CD4-positive, alpha-beta memory T cell (primary cell): ENCODE measurements at regions of chr20 and their contacts with region 1.

Region 1: GRCh38 chr20:21125849-21126580 is at the start of gene KIZ:
- DNase-seq: peak; percentile 92 to 99 (median 97)
- H3K4me3 ChIP-seq: peak within 1 kb of the TSS; percentile 78 to 81
- H3K4me3 Mint-ChIP-seq: peak within 1 kb of the TSS; percentile 84 to 99 (median 93)
- H3K27ac ChIP-seq: peak within 1 kb of the TSS; percentile 68
- H3K27ac Mint-ChIP-seq: peak within 1 kb of the TSS; percentile 55 to 98 (median 93)
- H3K4me1 ChIP-seq: peaks cover 21% of the 10 kb centered on the region
- H3K4me1 Mint-ChIP-seq: peaks cover 11 to 28% (median 20%) of the 10 kb centered on the region in 4 donors
- H3K27me3 ChIP-seq: no peaks in the 10 kb centered on the region
- H3K27me3 Mint-ChIP-seq: peaks cover 0 to 2% of the 10 kb centered on the region in 2 donors
- total RNA-seq, gene KIZ: 33.7 to 46.3 TPM

Region 2: DNA sequence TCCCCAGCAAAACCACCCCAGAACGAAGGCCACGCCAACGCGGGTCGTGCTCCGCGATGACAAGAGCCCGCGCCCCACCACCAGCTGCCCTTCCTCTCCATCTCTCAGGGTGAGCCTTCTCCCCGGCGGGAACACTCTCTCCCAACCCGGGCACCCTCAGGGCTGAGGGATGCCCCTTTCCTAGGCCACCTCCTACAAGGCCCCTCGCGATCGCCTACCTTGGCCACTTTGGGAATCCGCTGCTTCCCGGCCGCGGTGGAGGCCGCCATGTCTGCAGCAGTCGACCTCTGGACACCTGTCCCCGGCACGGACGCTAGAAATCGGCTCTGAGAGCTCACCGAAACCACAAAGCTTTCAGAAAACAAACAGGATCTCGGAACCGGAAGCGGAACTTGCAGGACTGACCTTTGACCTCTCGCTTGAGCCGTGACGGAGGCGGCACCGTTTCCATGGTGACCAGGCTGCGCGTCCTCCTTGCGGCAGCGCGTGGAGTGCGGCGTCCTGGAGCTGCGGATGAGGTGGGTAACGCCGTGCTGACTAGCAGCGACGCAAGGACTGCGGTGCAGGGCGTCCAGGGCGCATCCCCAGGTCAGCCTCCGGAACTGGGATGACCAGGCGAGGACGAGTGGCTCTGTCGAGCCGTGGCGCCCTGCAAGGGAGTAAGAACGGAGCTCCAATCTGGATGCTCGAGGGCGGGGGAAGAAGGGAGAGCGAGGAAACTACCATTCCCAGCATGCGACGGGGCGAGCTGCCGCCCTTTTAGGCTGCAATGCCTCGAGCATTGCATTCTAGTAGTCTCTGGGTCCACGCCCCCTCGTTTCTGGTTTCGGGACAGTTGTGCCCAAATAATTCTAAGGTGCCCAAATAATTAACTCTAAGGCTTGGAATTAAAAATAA is 1073.7 kb before region 1 on chr20 and contains the starts of genes CFAP61 and CRNKL1:
- CTCF ChIA-PET with region 1: no interaction called
- POLR2A ChIA-PET with region 1: no interaction called
- intact Hi-C with region 1: loop called (anchors 5 kb)
- DNase-seq: peak; percentile 97 to 99 (median 98)
- H3K4me3 ChIP-seq: peak within 1 kb of the TSS; percentile 85 to 98
- H3K4me3 Mint-ChIP-seq: peak within 1 kb of the TSS; percentile 93 to 100 (median 99)
- H3K27ac ChIP-seq: peak within 1 kb of the TSS; percentile 81
- H3K27ac Mint-ChIP-seq: peak within 1 kb of the TSS; percentile 92 to 100 (median 99)
- H3K4me1 ChIP-seq: peaks cover 19% of the 10 kb centered on the region
- H3K4me1 Mint-ChIP-seq: peaks cover 16 to 25% (median 21%) of the 10 kb centered on the region in 4 donors
- H3K27me3 ChIP-seq: peaks cover 7% of the 10 kb centered on the region
- H3K27me3 Mint-ChIP-seq: peaks cover 0 to 4% of the 10 kb centered on the region in 2 donors
- total RNA-seq, gene CFAP61: not detected
- total RNA-seq, gene CRNKL1: 30.0 to 32.9 TPM

Region 3: DNA sequence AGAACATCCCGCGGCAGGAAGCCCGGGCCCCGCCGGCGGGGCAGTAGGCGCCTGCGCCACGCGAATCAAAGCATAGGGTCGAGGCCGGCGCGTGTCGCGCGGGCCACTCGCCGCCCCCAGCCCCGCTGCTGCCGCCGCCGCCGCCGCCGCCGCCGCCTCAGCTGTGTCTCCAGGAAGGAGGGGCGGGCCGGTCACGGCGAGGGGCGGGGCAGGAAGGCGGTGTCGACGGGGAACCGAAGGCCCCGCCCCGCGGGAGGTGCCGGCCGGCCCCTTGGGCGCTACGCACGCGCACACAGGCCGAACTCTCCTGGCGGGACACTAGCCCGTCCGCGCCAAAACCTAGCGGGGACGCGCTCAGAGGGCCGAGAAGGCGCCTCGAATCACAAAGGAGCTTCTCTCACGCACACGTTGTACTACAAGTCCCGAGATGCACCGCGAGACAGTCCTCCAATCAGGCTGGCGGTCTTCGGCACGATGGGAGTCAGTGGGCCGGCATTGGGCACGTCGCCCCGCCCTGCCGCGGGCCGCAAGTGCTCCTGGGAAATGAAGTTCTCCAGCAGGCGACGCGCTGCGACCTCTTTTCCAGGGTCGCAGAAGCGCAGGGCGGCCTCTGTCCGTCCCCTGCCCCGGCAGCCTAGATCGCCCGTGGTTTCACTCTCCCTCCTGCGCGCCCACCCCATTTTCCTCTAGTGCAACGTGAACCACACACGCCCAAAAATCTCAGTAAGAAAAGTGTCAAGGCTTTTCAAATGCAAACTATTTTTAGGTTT is 413.4 kb before region 1 on chr20 and contains the start of gene RALGAPA2:
- CTCF ChIA-PET with region 1: interaction called, 3 read pairs
- POLR2A ChIA-PET with region 1: interaction called, 3 read pairs
- intact Hi-C with region 1: loop called (anchors 5 kb)
- DNase-seq: peak; percentile 94 to 96 (median 94)
- H3K4me3 ChIP-seq: peak within 1 kb of the TSS; percentile 42 to 79
- H3K4me3 Mint-ChIP-seq: peak within 1 kb of the TSS; percentile 91 to 97 (median 96)
- H3K27ac ChIP-seq: peak within 1 kb of the TSS; percentile 79
- H3K27ac Mint-ChIP-seq: peak within 1 kb of the TSS; percentile 90 to 99 (median 96)
- H3K4me1 ChIP-seq: peaks cover 17% of the 10 kb centered on the region
- H3K4me1 Mint-ChIP-seq: peaks cover 25 to 39% (median 29%) of the 10 kb centered on the region in 4 donors
- H3K27me3 ChIP-seq: no peaks in the 10 kb centered on the region
- H3K27me3 Mint-ChIP-seq: peaks cover 0 to 3% of the 10 kb centered on the region in 2 donors
- total RNA-seq, gene RALGAPA2: 33.6 to 36.3 TPM

Region 4: GRCh38 chr20:21048841-21049273 is 77.2 kb before region 1 on chr20:
- CTCF ChIA-PET with region 1: interaction called, 15 read pairs
- POLR2A ChIA-PET with region 1: no interaction called
- intact Hi-C with region 1: no loop called
- DNase-seq: peak; percentile 5 to 39 (median 23)
- H3K4me3 ChIP-seq: no peak overlapping the region
- H3K4me3 Mint-ChIP-seq: no peak overlapping the region
- H3K27ac ChIP-seq: no peak overlapping the region
- H3K27ac Mint-ChIP-seq: no peak overlapping the region
- H3K4me1 ChIP-seq: no peaks in the 10 kb centered on the region
- H3K4me1 Mint-ChIP-seq: no peaks in the 10 kb centered on the region
- H3K27me3 ChIP-seq: no peaks in the 10 kb centered on the region
- H3K27me3 Mint-ChIP-seq: peaks cover 17 to 36% of the 10 kb centered on the region in 2 donors

Region 5: GRCh38 chr20:21083885-21084284 is 42.1 kb before region 1 on chr20:
- CTCF ChIA-PET with region 1: no interaction called
- POLR2A ChIA-PET with region 1: no interaction called
- intact Hi-C with region 1: no loop called
- DNase-seq: no peak
- H3K4me3 ChIP-seq: no peak overlapping the region
- H3K4me3 Mint-ChIP-seq: no peak overlapping the region
- H3K27ac ChIP-seq: no peak overlapping the region
- H3K27ac Mint-ChIP-seq: no peak overlapping the region
- H3K4me1 ChIP-seq: no peaks in the 10 kb centered on the region
- H3K4me1 Mint-ChIP-seq: no peaks in the 10 kb centered on the region
- H3K27me3 ChIP-seq: peaks cover 4% of the 10 kb centered on the region
- H3K27me3 Mint-ChIP-seq: peaks cover 33 to 35% of the 10 kb centered on the region in 2 donors

Region 6: DNA sequence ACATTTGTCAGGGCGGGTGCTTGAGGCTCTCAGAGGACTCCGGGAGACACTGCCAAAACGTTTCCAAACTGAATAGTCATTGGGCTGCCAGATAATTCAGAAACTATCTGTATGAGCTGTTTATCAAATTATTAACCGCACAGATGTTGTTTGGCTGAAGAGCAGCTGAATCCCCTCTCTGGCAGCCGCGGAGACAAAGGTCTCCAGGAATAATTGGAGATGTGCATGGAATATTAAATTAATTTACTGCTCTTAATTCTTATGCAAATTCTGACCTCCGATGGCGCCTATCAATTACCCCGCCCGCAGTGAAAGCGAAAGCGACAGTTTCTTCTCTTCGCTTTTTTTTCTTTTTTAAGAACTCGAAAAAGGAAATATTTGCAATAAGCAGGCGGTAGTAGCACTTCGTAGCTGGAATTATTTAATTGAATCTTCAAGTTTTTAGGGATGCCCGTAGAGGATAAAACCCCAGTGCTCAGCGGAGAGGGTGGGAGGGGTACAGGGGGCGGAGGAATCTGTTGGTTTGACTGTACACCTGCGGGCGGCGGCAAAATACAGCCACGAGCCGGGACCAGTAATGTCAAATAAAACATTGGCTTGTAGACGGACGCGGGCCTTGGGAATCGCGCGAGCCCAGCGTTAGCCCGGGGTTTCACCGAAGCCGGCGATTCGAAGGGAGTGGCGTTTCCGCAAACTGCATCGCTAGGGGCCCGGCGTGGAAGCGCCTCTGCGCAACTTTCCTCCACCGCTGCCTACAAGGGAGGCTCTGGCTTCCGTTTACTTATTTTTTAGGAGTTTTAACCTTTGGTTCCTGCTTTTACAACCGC is 26.1 kb before region 1 on chr20:
- CTCF ChIA-PET with region 1: interaction called, 6 read pairs
- POLR2A ChIA-PET with region 1: interaction called, 29 read pairs
- intact Hi-C with region 1: loop called (anchors 1 kb)
- DNase-seq: peak in 4 of 5 donors; percentile 44 to 62 (median 48)
- H3K4me3 ChIP-seq: peak overlapping the region; percentile 54 to 62
- H3K4me3 Mint-ChIP-seq: peak overlapping the region; percentile 80 to 98 (median 88)
- H3K27ac ChIP-seq: no peak overlapping the region
- H3K27ac Mint-ChIP-seq: peak overlapping the region; percentile 42 to 93 (median 74)
- H3K4me1 ChIP-seq: peaks cover 44% of the 10 kb centered on the region
- H3K4me1 Mint-ChIP-seq: peaks cover 16 to 59% (median 42%) of the 10 kb centered on the region in 4 donors
- H3K27me3 ChIP-seq: peaks cover 65% of the 10 kb centered on the region
- H3K27me3 Mint-ChIP-seq: peaks cover 61% of the 10 kb centered on the region in 2 donors